ENCODE measurements at regions of chr15 and their contacts with region 1.

Region 1: GRCh38 chr15:55290528-55291057 is 980 bp upstream of the RAB27A start:
- DNase-seq: peak; percentile 61 to 90 (median 82)
- ATAC-seq: peak; percentile 76 to 81 (median 81)
- H3K4me3 ChIP-seq: peak overlapping the region; percentile 92 to 97
- H3K4me3 Mint-ChIP-seq: peak overlapping the region; percentile 88 to 93 (median 92)
- H3K27ac ChIP-seq: peak overlapping the region; percentile 95
- H3K27ac Mint-ChIP-seq: peak overlapping the region; percentile 78 to 90
- H3K4me1 ChIP-seq: peaks cover 5 to 26% of the 10 kb centered on the region in 2 experiments
- H3K4me1 Mint-ChIP-seq: peaks cover 35 to 36% (median 35%) of the 10 kb centered on the region in 3 donors
- H3K27me3 ChIP-seq: no peaks in the 10 kb centered on the region
- H3K27me3 Mint-ChIP-seq: no peaks in the 10 kb centered on the region

Region 2: DNA sequence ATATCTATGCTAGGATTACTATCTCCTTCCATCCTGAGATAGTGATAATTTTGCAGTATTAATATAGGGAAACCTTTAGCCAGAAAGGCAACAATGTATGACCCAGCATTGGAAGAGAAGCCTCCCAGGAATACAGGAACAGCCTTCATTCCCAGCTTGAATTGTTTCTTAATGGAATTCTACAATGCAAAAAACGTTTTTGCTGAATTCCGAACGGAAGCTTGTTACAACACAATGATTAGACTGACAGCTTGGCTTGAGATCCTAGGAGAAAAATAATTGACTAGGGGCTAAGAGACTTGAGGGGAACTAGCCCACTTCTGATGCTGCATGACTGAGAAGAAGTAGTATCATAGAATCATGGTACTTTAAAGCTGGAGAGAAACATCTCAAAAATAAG is 234.1 kb before region 1 on chr15:
- CTCF ChIA-PET with region 1: no interaction called
- POLR2A ChIA-PET with region 1: no interaction called
- DNase-seq: no peak
- ATAC-seq: no peak
- H3K4me3 ChIP-seq: no peak overlapping the region
- H3K4me3 Mint-ChIP-seq: no peak overlapping the region
- H3K27ac ChIP-seq: no peak overlapping the region
- H3K27ac Mint-ChIP-seq: no peak overlapping the region
- H3K4me1 ChIP-seq: no peaks in the 10 kb centered on the region
- H3K4me1 Mint-ChIP-seq: no peaks in the 10 kb centered on the region
- H3K27me3 ChIP-seq: no peaks in the 10 kb centered on the region
- H3K27me3 Mint-ChIP-seq: peaks cover 11 to 28% of the 10 kb centered on the region in 2 donors

Region 3: GRCh38 chr15:55204464-55204863 is 86.1 kb before region 1 on chr15:
- CTCF ChIA-PET with region 1: no interaction called
- POLR2A ChIA-PET with region 1: no interaction called
- DNase-seq: no peak
- ATAC-seq: no peak
- H3K4me3 ChIP-seq: no peak overlapping the region
- H3K4me3 Mint-ChIP-seq: no peak overlapping the region
- H3K27ac ChIP-seq: no peak overlapping the region
- H3K27ac Mint-ChIP-seq: no peak overlapping the region
- H3K4me1 ChIP-seq: no peaks in the 10 kb centered on the region
- H3K4me1 Mint-ChIP-seq: no peaks in the 10 kb centered on the region
- H3K27me3 ChIP-seq: no peaks in the 10 kb centered on the region
- H3K27me3 Mint-ChIP-seq: no peaks in the 10 kb centered on the region

Region 4: GRCh38 chr15:55267401-55268175 is 23.0 kb before region 1 on chr15:
- CTCF ChIA-PET with region 1: interaction called in 1 of 2 experiments, 17 read pairs
- POLR2A ChIA-PET with region 1: interaction called, 4 to 5 read pairs
- DNase-seq: peak; percentile 49 to 87 (median 77)
- ATAC-seq: peak; percentile 91 to 96 (median 95)
- H3K4me3 ChIP-seq: peak overlapping the region; percentile 33 to 35
- H3K4me3 Mint-ChIP-seq: peak overlapping the region; percentile 63 to 74 (median 73)
- H3K27ac ChIP-seq: peak overlapping the region; percentile 93
- H3K27ac Mint-ChIP-seq: peak overlapping the region; percentile 94 to 98
- H3K4me1 ChIP-seq: peaks cover 14 to 63% of the 10 kb centered on the region in 2 experiments
- H3K4me1 Mint-ChIP-seq: peaks cover 71 to 79% (median 72%) of the 10 kb centered on the region in 3 donors
- H3K27me3 ChIP-seq: no peaks in the 10 kb centered on the region
- H3K27me3 Mint-ChIP-seq: no peaks in the 10 kb centered on the region

Region 5: GRCh38 chr15:55318588-55319494 is 28.2 kb after region 1 on chr15 and contains the starts of genes PIGB and PIGBOS1:
- CTCF ChIA-PET with region 1: interaction called in 1 of 2 experiments, 14 read pairs
- POLR2A ChIA-PET with region 1: interaction called in 1 of 2 experiments, 3 read pairs
- DNase-seq: peak; percentile 57 to 85 (median 72)
- ATAC-seq: peak; percentile 90 to 93 (median 91)
- H3K4me3 ChIP-seq: peak within 1 kb of the TSS; percentile 91 to 94
- H3K4me3 Mint-ChIP-seq: peak within 1 kb of the TSS; percentile 98 to 99 (median 98)
- H3K27ac ChIP-seq: peak within 1 kb of the TSS; percentile 98
- H3K27ac Mint-ChIP-seq: peak within 1 kb of the TSS; percentile 98 to 99
- H3K4me1 ChIP-seq: peaks cover 10 to 16% of the 10 kb centered on the region in 2 experiments
- H3K4me1 Mint-ChIP-seq: peaks cover 66 to 72% (median 72%) of the 10 kb centered on the region in 3 donors
- H3K27me3 ChIP-seq: no peaks in the 10 kb centered on the region
- H3K27me3 Mint-ChIP-seq: no peaks in the 10 kb centered on the region
- total RNA-seq, gene PIGB: 16.3 to 28.2 (median 20.1) TPM
- total RNA-seq, gene PIGBOS1: 10.0 to 24.4 (median 16.7) TPM

Region 6: GRCh38 chr15:55694652-55695150 is 404.1 kb after region 1 on chr15:
- CTCF ChIA-PET with region 1: no interaction called
- POLR2A ChIA-PET with region 1: no interaction called
- DNase-seq: no peak
- ATAC-seq: no peak
- H3K4me3 ChIP-seq: no peak overlapping the region
- H3K4me3 Mint-ChIP-seq: no peak overlapping the region
- H3K27ac ChIP-seq: no peak overlapping the region
- H3K27ac Mint-ChIP-seq: no peak overlapping the region
- H3K4me1 ChIP-seq: no peaks in the 10 kb centered on the region
- H3K4me1 Mint-ChIP-seq: no peaks in the 10 kb centered on the region
- H3K27me3 ChIP-seq: peaks cover 0 to 13% of the 10 kb centered on the region in 2 experiments
- H3K27me3 Mint-ChIP-seq: peaks cover 0 to 10% of the 10 kb centered on the region in 2 donors

Measured in T-cell (primary cell).